ENCODE measurements at regions of chr10 and their contacts with region 1.

Region 1: GRCh38 chr10:91298224-91298871 is 77.9 kb downstream of the PCGF5 start:
- DNase-seq: peak; percentile 55
- H3K4me3 ChIP-seq: peak overlapping the region; percentile 54
- H3K27ac ChIP-seq: peak overlapping the region; percentile 21
- H3K27me3 ChIP-seq: no peaks in the 10 kb centered on the region
- CTCF ChIP-seq: peak; percentile 95

Region 2: DNA sequence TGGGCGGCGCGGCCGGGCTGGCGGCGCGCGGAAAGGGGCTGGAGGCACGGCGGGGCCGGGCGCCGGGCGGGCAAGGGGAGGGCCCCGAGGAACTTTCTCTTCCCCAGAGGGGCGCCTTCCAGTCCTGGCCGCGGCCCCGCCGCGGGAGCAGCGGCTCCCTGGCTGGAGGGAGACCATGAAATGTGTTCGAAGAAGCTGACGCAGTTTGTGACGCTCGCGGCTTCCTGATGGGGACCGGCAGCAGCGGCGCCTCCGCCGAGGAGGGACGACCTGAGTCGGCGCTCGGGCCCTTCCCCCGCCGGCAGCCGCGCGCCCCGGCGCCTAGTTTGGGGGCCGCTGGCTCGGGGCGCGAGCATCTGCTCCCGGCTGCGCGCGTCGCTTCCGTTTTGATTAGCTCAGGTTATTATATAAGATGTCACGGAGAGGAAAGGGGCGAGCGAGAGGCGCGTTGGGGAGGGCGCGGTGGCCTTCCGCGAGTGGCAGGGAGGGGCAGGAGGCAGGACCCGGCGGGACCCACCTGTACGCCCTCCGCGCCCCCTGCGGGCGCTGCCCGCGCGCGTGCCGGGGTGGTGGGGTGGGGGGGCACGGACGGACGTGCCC is 135.0 kb before region 1 on chr10:
- CTCF ChIA-PET with region 1: no interaction called
- POLR2A ChIA-PET with region 1: no interaction called
- DNase-seq: no peak
- H3K4me3 ChIP-seq: peak overlapping the region; percentile 75
- H3K27ac ChIP-seq: peak overlapping the region; percentile 52
- H3K27me3 ChIP-seq: peaks cover 5% of the 10 kb centered on the region
- CTCF ChIP-seq: no peak

Region 3: GRCh38 chr10:91251430-91252056 is 46.8 kb before region 1 on chr10:
- CTCF ChIA-PET with region 1: interaction called, 10 read pairs
- POLR2A ChIA-PET with region 1: no interaction called
- DNase-seq: no peak
- H3K4me3 ChIP-seq: no peak overlapping the region
- H3K27ac ChIP-seq: no peak overlapping the region
- H3K27me3 ChIP-seq: no peaks in the 10 kb centered on the region
- CTCF ChIP-seq: peak; percentile 93

Region 4: GRCh38 chr10:91340613-91341362 is 42.4 kb after region 1 on chr10:
- CTCF ChIA-PET with region 1: interaction called, 15 read pairs
- POLR2A ChIA-PET with region 1: no interaction called
- DNase-seq: peak; percentile 55
- H3K4me3 ChIP-seq: no peak overlapping the region
- H3K27ac ChIP-seq: peak overlapping the region; percentile 55
- H3K27me3 ChIP-seq: no peaks in the 10 kb centered on the region
- CTCF ChIP-seq: no peak

Region 5: GRCh38 chr10:91389636-91390512 is 91.5 kb after region 1 on chr10:
- CTCF ChIA-PET with region 1: interaction called, 25 read pairs
- POLR2A ChIA-PET with region 1: no interaction called
- DNase-seq: no peak
- H3K4me3 ChIP-seq: peak overlapping the region; percentile 17
- H3K27ac ChIP-seq: no peak overlapping the region
- H3K27me3 ChIP-seq: peaks cover 30% of the 10 kb centered on the region
- CTCF ChIP-seq: peak; percentile 58

Region 6: DNA sequence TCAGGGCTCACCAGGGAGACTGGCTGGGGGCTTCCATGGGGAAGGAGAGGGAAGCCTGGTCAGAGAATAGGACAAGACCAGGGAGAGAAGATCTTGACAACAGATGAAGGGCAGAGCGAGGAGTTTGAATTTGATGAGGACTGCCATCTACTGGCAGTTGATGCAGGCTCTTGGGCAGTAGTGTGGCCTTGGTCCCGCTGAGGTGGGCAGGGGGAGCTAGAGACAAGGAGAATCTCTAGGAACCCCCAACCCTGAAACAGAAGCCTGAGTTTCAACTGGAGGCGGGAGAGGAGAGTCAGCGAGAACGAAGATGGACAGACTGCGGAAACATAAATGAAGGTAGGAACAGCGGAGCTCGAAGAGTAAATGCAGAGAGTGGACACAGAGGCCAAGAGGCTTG is 253.5 kb after region 1 on chr10:
- CTCF ChIA-PET with region 1: interaction called, 46 read pairs
- POLR2A ChIA-PET with region 1: no interaction called
- DNase-seq: peak; percentile 34
- H3K4me3 ChIP-seq: no peak overlapping the region
- H3K27ac ChIP-seq: no peak overlapping the region
- H3K27me3 ChIP-seq: no peaks in the 10 kb centered on the region
- CTCF ChIP-seq: peak; percentile 89

Region 7: DNA sequence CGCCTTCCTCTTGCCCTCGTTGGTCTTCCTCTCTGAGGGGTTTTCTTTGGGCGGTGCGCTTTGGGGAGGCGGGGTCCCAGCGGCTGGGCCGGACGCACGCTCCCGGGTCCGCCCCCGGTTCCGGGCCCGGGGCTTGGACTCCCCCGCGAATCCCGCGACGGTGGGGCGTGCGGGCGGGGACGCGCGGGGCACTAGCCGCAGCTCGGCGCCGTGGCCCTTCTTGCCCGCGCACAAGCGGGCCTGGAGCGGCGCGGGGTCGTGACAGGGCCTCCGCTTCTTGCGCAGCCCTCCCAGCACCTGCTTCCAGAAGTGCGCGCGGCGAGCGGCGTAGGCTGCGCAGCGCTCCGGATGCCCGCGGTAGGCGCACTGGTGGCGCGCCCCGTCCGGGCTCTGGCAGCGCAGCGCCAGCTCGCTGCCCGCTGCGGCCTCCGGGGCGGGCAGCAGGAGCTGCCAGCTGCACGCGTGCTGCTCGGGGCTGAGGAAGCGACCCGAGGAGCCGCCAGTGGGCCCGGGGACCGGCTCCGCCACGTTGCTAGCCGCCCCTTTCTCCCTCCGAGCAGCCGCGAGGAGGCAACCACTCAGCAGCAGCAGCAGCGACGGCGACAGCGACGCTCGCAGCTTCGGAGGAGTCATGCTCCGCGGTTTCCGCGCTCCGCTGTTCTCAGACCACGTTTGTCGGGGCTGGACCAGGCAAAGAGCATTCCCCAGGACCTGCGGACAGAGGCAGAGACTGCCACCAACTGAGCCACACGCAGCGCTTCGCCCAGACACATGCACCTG is 610.2 kb after region 1 on chr10:
- CTCF ChIA-PET with region 1: interaction called, 14 read pairs
- POLR2A ChIA-PET with region 1: no interaction called
- DNase-seq: no peak
- H3K4me3 ChIP-seq: peak overlapping the region; percentile 72
- H3K27ac ChIP-seq: no peak overlapping the region
- H3K27me3 ChIP-seq: no peaks in the 10 kb centered on the region
- CTCF ChIP-seq: peak; percentile 20; the same call in 1 of the 2 replicates